Mammary epithelial cell (primary cell): ENCODE measurements at regions of chr21 and their contacts with region 1.

Region 1: DNA sequence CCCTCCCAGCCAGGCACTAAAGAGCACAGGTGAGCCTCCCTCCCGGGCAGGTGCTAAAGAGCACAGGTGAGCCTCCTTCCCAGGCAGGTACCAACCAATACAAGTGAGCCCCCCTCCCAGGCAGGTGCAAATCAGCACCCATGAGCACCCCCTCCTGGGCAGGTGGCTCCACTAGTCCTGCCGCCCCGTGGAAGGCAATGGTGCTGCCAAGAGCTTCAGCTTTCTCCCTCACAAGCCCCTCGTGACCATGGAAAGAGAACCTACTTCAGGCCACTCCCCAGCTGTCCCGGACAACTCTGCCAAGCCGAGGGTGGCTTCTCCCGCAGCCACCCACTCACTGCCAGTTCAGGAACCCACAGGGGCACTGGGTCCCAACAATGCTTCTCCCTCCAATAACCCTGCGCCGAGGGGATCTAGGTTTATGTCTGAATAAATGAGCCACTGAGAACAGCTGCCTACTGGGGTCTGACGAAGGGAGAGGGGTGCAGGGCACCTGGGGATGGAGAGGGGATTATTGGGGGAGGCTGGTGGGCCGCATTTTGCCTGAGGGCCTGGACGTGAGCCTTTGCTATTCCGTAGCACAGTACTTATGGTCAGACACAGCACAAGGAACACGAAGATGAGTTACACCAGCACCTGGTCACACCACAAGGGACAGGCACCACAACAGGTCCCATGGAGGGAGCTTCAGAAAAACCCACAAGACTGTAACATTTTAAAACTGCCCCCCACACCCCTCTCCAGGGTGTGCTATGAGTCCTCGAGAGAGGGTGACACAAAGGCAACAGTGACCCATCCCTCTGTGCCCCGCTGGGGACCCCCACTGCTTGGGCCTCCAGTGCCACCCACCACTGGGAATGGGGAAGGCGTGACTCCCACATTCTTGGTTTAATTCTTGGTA is 46.3 kb downstream of the PRDM15 start:
- DNase-seq: no peak
- H3K4me3 ChIP-seq: no peak overlapping the region
- H3K27ac ChIP-seq: no peak overlapping the region
- H3K4me1 ChIP-seq: no peaks in the 10 kb centered on the region
- H3K27me3 ChIP-seq: no peaks in the 10 kb centered on the region
- CTCF ChIP-seq: peak in 1 of 2 donors; percentile 2

Region 2: GRCh38 chr21:41752231-41752681 is 80.6 kb before region 1 on chr21:
- CTCF ChIA-PET with region 1: no interaction called
- dilution Hi-C with region 1: loop called (anchors 5 kb)
- in situ Hi-C with region 1: no loop called
- intact Hi-C with region 1: no loop called
- DNase-seq: peak; percentile 83
- H3K4me3 ChIP-seq: peak overlapping the region in 1 of 3 experiments; percentile 5
- H3K27ac ChIP-seq: peak overlapping the region; percentile 50
- H3K4me1 ChIP-seq: peaks cover 74% of the 10 kb centered on the region
- H3K27me3 ChIP-seq: no peaks in the 10 kb centered on the region
- CTCF ChIP-seq: no peak

Region 3: DNA sequence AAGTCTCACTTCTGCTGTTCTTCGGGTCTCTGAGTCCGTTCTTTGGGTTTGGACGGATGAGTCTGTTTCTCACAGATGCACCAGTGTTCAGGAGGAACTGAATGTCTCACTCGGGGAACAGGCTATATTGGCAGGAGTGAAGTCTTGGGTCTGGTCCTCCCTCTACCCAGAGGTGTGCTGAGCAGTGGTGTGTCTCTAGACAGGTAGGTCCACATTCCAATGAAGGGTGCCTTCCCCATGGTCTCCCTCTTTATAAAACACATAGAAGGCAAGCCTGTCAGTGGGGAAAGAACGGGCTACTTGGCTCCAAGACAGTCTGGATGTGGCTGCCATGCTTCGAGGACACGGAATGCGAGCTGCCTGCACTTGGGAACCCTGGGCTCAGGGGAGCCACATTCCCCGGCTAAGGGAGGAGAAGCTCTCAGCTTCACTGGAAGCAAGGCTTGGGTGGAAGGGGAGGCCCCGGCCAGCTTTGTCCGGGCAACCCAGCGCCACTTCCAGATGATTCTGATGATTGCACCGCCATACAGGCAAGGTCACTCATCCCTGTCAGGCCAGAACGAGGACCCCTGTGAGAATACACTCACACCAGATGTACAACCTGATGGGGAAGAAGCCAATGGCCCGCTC is 36.3 kb before region 1 on chr21:
- CTCF ChIA-PET with region 1: interaction called, 3 read pairs
- dilution Hi-C with region 1: loop called (anchors 5 kb)
- in situ Hi-C with region 1: no loop called
- intact Hi-C with region 1: no loop called
- DNase-seq: no peak
- H3K4me3 ChIP-seq: no peak overlapping the region
- H3K27ac ChIP-seq: no peak overlapping the region
- H3K4me1 ChIP-seq: no peaks in the 10 kb centered on the region
- H3K27me3 ChIP-seq: no peaks in the 10 kb centered on the region
- CTCF ChIP-seq: no peak

Region 4: GRCh38 chr21:41907536-41908258 is 74.9 kb after region 1 on chr21:
- CTCF ChIA-PET with region 1: no interaction called
- dilution Hi-C with region 1: loop called (anchors 5 kb)
- in situ Hi-C with region 1: no loop called
- intact Hi-C with region 1: no loop called
- DNase-seq: no peak
- H3K4me3 ChIP-seq: no peak overlapping the region
- H3K27ac ChIP-seq: no peak overlapping the region
- H3K4me1 ChIP-seq: no peaks in the 10 kb centered on the region
- H3K27me3 ChIP-seq: no peaks in the 10 kb centered on the region
- CTCF ChIP-seq: no peak

Region 5: DNA sequence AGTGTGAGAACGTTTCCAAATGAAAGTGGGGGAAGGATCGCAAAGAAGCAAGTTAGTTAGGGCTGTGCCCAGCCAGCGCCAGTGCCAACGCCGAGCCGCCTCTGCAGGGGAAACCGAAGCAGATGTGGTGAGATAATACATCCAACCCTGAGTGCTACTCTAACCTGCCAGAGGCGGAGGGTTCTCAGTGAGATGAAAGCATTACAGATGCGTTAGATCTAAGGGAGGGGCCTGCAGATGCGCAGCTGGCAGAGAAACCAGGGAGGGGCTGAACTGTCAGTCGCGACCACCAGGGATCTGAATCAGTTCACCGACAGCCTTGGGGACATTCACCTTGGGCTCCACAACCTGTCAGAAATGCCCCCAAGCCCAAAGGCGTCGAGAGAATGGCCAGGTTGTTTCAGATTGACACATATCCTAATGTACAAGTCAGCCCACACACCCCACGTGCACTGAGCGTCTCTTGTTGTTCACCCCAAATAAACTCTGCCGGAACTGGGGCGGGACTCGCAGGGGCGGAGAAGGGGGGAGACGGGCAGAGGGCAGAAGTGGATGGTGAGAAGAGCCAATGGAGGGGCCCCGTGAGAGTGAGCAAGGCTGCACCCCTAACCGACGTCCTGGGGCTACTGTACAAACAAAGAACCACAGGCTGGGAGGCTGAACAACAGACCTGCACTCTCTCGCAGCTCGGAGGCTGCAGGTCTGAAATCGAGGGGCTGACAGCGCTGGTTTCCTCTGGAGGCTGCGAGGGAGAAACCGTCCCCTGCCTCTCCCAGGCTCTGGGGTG is 229.6 kb after region 1 on chr21:
- CTCF ChIA-PET with region 1: no interaction called
- dilution Hi-C with region 1: no loop called
- in situ Hi-C with region 1: no loop called
- intact Hi-C with region 1: no loop called
- DNase-seq: no peak
- H3K4me3 ChIP-seq: no peak overlapping the region
- H3K27ac ChIP-seq: no peak overlapping the region
- H3K4me1 ChIP-seq: peaks cover 19% of the 10 kb centered on the region
- H3K27me3 ChIP-seq: no peaks in the 10 kb centered on the region
- CTCF ChIP-seq: no peak